Activated CD4-positive, alpha-beta memory T cell treated with anti-CD3 and anti-CD28 coated beads for 36 hours (primary cell): ENCODE measurements at regions of chr4 and their contacts with region 1.

Region 1: DNA sequence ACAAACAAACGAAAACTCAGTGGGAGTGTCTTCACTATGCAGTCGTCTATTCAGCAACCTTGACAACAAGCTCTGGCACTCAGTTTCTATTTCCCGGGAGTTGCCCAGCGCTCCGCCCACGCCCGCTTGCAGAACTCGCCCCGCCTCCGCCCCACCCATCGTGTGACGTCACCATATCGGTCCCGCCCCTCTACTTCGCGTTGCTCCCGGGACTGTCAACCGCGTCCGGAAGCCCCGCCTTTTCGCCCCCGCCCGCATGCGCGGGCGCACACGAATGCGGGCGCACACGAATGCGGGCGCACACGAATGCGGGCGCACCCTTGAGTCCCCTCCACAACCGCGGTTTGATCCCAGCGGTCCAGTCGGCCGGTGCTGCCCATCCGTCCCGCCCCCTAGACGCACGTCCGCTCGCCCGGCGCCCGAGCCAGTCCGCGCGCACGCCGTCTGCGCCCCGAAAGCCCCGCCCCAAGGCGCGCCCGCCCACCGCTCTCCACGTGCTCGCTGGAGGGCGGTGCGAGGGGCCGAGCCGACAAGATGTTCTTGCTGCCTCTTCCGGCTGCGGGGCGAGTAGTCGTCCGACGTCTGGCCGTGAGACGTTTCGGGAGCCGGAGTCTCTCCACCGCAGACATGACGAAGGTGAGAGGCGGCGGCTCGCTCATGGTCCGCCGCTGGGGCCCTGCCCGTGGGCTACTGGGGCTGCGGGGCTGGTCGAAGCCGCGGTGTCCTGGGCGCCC is at the start of gene LAP3:
- DNase-seq: peak; percentile 99
- H3K4me3 Mint-ChIP-seq: peak within 1 kb of the TSS; percentile 93
- H3K27ac Mint-ChIP-seq: peak within 1 kb of the TSS; percentile 94
- H3K4me1 Mint-ChIP-seq: peaks cover 20% of the 10 kb centered on the region
- H3K27me3 Mint-ChIP-seq: no peaks in the 10 kb centered on the region
- total RNA-seq, gene LAP3: 118 to 120 TPM

Region 2: GRCh38 chr4:17273047-17273446 is 304.1 kb before region 1 on chr4:
- CTCF ChIA-PET with region 1: no interaction called
- POLR2A ChIA-PET with region 1: no interaction called
- intact Hi-C with region 1: no loop called
- DNase-seq: no peak
- H3K4me3 Mint-ChIP-seq: no peak overlapping the region
- H3K27ac Mint-ChIP-seq: no peak overlapping the region
- H3K4me1 Mint-ChIP-seq: no peaks in the 10 kb centered on the region
- H3K27me3 Mint-ChIP-seq: peaks cover 16% of the 10 kb centered on the region

Region 3: GRCh38 chr4:17336524-17336961 is 240.6 kb before region 1 on chr4:
- CTCF ChIA-PET with region 1: no interaction called
- POLR2A ChIA-PET with region 1: no interaction called
- intact Hi-C with region 1: loop called (anchors 1 kb)
- DNase-seq: peak; percentile 87
- H3K4me3 Mint-ChIP-seq: peak overlapping the region; percentile 44
- H3K27ac Mint-ChIP-seq: peak overlapping the region; percentile 75
- H3K4me1 Mint-ChIP-seq: peaks cover 33% of the 10 kb centered on the region
- H3K27me3 Mint-ChIP-seq: no peaks in the 10 kb centered on the region

Region 4: GRCh38 chr4:17511950-17512795 is 64.9 kb before region 1 on chr4 and contains the start of gene QDPR:
- CTCF ChIA-PET with region 1: no interaction called
- POLR2A ChIA-PET with region 1: no interaction called
- intact Hi-C with region 1: loop called (anchors 1 kb)
- DNase-seq: peak; percentile 84
- H3K4me3 Mint-ChIP-seq: peak within 1 kb of the TSS; percentile 99
- H3K27ac Mint-ChIP-seq: peak within 1 kb of the TSS; percentile 77
- H3K4me1 Mint-ChIP-seq: peaks cover 26% of the 10 kb centered on the region
- H3K27me3 Mint-ChIP-seq: peaks cover 7% of the 10 kb centered on the region
- total RNA-seq, gene QDPR: 35.5 to 36.3 TPM

Region 5: GRCh38 chr4:17544205-17544604 is 32.9 kb before region 1 on chr4:
- CTCF ChIA-PET with region 1: interaction called, 13 read pairs
- POLR2A ChIA-PET with region 1: interaction called, 8 read pairs
- intact Hi-C with region 1: loop called (anchors 1 kb)
- DNase-seq: no peak
- H3K4me3 Mint-ChIP-seq: no peak overlapping the region
- H3K27ac Mint-ChIP-seq: no peak overlapping the region
- H3K4me1 Mint-ChIP-seq: no peaks in the 10 kb centered on the region
- H3K27me3 Mint-ChIP-seq: peaks cover 13% of the 10 kb centered on the region

Region 6: DNA sequence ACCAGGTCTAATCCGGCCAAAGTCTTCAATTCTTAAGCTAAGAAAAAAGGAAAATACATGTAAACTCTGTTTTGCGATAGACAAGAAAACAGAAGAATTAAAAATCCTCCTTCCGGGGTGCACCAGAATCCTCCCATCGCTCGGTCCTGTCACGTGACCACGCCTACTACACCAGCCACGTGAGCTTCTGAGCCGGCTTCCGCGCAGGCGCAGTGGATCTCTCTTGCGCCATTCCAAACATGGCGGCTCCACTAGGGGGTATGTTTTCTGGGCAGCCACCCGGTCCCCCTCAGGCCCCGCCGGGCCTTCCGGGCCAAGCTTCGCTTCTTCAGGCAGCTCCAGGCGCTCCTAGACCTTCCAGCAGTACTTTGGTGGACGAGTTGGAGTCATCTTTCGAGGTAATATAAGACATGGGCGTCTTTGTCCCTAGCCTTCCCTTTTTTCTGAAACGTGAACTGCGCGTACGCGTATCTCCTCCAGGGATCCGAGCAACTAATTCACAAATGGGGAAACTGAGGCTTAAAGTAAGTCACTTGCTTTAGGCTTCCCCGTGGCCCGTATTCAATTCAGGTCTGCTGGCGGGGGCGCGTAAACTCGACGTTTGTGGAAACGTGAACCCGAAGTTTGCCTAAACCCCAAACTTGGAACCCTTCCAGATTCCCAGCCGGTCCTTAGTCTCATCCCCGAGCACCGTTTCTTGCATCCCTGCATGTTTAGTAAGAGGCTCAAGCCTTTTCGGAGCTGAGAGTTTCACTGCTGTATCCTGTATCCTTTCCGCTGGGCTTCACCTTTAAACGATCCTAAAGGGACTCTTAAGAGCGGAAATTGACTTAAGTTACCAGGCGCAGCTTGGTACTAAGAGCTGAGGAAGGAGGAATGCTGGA is 37.6 kb after region 1 on chr4 and contains the start of gene MED28:
- CTCF ChIA-PET with region 1: interaction called, 3 read pairs
- POLR2A ChIA-PET with region 1: interaction called, 15 read pairs
- intact Hi-C with region 1: loop called (anchors 1 kb)
- DNase-seq: peak; percentile 97
- H3K4me3 Mint-ChIP-seq: peak within 1 kb of the TSS; percentile 100
- H3K27ac Mint-ChIP-seq: peak within 1 kb of the TSS; percentile 97
- H3K4me1 Mint-ChIP-seq: peaks cover 48% of the 10 kb centered on the region
- H3K27me3 Mint-ChIP-seq: peaks cover 3% of the 10 kb centered on the region
- total RNA-seq, gene MED28: 52.9 to 54.5 TPM

Region 7: DNA sequence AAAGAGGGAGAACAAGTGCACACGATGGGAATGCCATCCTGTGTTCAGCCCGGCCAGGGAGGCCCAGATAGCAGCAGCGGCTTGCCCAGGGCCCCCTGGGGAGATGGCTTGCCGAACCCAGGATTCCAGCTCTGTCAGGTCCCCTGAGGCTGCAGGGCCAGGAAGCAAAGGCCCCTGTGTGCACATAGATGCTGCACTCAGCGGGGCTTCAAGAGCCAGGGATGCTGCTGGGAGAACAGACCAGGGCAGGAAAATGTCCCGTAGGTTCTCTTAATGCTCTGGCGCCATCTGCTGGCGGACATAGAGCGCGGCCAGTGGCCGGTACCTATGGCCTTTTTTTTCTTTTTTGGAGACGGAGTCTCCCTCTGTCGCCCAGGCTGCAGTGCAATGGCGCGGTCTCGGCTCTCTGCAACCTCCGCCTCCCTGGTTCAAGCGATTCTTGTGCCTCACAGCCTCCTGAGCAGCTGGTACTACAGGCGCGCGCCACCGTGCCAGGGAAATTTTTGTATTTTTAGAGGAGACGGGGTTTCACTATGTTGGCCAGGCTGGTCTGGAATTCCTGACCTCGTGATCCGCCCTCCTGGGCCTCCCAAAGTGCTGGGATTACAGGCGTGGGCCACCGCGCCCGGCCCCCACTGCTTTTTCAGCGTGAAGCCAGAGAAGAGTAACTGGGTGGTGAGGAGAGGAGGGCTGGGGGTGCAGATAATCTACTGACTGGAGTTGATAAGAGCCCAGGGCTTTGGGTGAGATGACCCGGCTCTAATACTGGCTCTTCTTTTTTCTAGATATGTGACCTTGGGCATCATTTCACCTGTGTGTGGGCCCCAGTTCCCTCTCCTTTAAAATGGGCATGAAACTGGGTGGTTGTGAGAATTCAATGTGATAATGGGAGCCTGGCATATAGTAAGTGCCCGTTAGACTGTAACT is 59.9 kb after region 1 on chr4:
- CTCF ChIA-PET with region 1: no interaction called
- POLR2A ChIA-PET with region 1: no interaction called
- intact Hi-C with region 1: loop called (anchors 2 kb)
- DNase-seq: peak; percentile 82
- H3K4me3 Mint-ChIP-seq: no peak overlapping the region
- H3K27ac Mint-ChIP-seq: no peak overlapping the region
- H3K4me1 Mint-ChIP-seq: no peaks in the 10 kb centered on the region
- H3K27me3 Mint-ChIP-seq: no peaks in the 10 kb centered on the region

Region 8: GRCh38 chr4:17708992-17709762 is 132.1 kb after region 1 on chr4:
- CTCF ChIA-PET with region 1: no interaction called
- POLR2A ChIA-PET with region 1: no interaction called
- intact Hi-C with region 1: no loop called
- DNase-seq: no peak
- H3K4me3 Mint-ChIP-seq: no peak overlapping the region
- H3K27ac Mint-ChIP-seq: no peak overlapping the region
- H3K4me1 Mint-ChIP-seq: no peaks in the 10 kb centered on the region
- H3K27me3 Mint-ChIP-seq: peaks cover 4% of the 10 kb centered on the region

Region 9: DNA sequence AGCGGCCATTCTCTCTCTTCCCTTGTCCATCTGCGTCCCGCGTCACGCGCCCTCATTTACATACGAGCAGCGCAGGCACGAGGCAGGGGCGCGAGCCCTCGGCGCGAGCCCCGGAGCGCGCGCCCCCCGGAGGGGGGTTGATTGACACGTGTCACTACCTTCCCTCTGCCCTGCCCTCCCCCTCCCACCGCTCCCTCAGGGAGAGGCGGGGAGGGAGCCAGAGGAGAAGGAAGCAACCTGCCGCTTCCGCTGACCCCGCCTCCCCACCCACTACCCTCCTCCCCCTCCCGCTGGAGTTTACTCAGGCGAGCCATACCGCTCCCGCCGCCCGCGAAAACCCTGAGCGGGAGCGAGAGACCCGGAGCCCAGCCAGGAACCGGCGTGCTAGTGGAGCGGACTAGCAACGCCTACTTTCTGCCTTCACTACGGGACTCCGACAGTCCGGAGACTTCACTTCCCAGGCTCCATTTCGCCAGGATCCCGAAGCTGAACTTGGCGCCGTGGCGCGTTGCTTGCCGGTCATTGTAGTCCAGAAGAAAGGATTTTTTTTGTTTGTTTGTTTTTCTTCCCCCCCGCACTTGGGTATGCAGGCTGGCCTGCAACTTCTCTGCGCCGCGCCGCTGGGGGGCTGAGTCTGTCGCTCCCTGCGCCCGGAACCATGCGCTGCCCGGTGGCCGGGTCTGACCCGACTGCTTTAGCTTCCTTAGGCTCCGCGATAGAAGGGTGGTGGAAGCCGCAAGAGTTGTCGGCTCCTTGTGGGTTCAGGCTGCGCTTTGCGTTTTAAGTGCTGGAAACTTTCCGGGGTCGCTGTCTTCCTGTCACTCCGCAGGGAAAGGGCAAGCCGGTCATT is 444.8 kb after region 1 on chr4 and contains the start of gene LCORL:
- CTCF ChIA-PET with region 1: no interaction called
- POLR2A ChIA-PET with region 1: no interaction called
- intact Hi-C with region 1: loop called (anchors 1 kb)
- DNase-seq: peak; percentile 91
- H3K4me3 Mint-ChIP-seq: peak within 1 kb of the TSS; percentile 91
- H3K27ac Mint-ChIP-seq: peak within 1 kb of the TSS; percentile 78
- H3K4me1 Mint-ChIP-seq: peaks cover 13% of the 10 kb centered on the region
- H3K27me3 Mint-ChIP-seq: peaks cover 37% of the 10 kb centered on the region
- total RNA-seq, gene LCORL: 8.1 to 10.5 TPM